ENCODE measurements at regions of chr9 and their contacts with region 1.

Region 1: DNA sequence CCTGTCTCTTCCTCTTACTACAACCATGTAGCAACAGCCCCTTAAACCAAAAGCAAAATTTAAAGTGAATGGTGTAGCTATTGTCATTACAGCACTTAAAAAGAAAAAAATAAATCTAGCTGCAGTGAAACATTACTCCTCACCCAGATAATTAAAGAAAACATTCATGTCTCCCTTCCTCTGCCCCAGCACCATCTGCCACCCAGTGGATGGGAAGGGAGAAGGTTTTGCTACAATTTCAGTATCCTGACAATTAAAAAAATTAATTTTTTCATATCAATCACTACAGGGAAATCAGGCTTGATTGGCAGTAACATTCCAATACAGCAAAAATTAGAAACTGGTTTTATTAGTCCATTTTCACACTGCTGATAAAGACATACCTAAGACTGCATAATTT is 147.4 kb upstream of the PUM3 start:
- DNase-seq: no peak
- ATAC-seq: no peak

Region 2: GRCh38 chr9:2923766-2924379 is 67.4 kb before region 1 on chr9:
- intact Hi-C with region 1: loop called (anchors 1 kb)
- DNase-seq: no peak
- ATAC-seq: no peak

Region 3: GRCh38 chr9:3018076-3018475 is 26.8 kb after region 1 on chr9:
- intact Hi-C with region 1: no loop called
- DNase-seq: no peak
- ATAC-seq: no peak